Psoas muscle (tissue), 8 donors: ENCODE measurements at regions of chr19 and their contacts with region 1.

Region 1: DNA sequence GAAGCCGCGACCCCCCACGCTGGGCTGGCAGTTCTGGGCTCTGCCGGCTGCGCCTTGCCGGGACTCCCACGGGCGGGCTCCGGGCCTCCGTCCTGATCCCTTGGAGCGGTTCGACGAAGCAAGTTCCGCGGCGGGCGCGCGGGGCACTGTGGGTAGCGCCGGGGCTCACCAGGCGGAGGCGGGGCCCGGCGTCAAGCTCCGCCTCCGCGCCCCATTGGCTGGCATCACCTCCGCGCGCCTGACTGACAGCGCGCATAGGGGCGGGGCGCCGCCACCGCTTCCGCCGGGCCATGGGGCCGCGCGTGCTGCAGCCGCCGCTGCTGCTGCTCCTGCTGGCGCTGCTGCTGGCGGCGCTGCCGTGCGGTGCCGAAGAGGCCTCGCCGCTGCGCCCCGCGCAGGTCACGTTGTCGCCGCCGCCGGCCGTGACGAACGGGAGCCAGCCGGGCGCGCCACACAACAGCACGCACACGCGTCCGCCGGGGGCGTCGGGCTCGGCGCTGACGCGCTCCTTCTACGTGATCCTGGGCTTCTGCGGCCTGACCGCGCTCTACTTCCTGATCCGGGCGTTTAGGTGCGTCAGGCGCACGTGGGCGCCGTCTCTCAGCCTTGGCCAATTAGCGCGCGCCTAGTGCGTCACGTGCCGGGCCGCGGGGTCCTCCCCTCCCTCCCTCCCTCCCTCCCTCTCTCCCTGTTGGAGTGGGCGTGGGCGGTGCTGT is at the start of gene FAM174C:
- DNase-seq: peak; percentile 97
- ATAC-seq: peak; percentile 76 to 81 (median 77)
- H3K4me3 ChIP-seq: peak within 1 kb of the TSS; percentile 87
- H3K27ac ChIP-seq: peak within 1 kb of the TSS; percentile 99
- H3K4me1 ChIP-seq: peaks cover 56% of the 10 kb centered on the region
- H3K27me3 ChIP-seq: no peaks in the 10 kb centered on the region
- CTCF ChIP-seq: peak; percentile 8
- total RNA-seq, gene FAM174C: 9.0 to 18.1 (median 14.0) TPM

Region 2: DNA sequence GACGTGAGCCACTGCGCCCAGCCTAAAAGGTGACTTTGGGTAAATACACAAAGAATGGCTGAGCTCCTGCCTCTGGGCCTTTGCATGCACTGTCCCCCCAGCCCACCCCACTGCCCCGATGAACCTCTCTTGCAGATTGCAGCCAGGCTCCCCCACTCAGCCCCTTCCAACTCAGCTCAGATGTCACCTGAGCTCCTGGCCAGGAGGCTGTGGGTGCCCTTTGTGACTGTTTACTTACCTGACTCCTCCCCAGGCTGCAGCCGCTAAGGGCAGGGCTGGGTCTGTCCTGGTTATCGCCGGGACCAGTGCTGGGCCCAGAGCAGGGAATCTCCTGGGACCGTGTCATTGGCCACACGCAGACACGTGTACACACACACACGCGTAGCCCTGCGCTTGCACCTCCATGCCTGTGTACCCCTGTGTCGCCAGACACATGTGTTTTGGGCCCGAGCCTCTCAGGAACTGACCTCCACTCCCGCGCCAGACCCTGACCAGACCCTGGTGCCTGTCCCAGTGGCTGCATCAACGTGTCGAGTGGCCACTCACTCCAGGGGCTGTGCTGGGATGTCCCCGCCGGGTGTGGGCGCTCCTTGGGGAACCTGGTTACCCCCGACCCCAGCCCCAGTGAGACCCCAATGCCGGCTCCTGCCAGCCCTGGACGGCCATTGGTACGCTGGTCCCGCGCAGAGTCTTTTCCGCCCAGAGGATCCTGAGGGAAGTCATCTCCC is 28.9 kb after region 1 on chr19:
- intact Hi-C with region 1: no loop called
- DNase-seq: no peak
- ATAC-seq: peak in 1 of 4 donors; percentile 30
- H3K4me3 ChIP-seq: no peak overlapping the region
- H3K27ac ChIP-seq: no peak overlapping the region
- H3K4me1 ChIP-seq: no peaks in the 10 kb centered on the region
- H3K27me3 ChIP-seq: peaks cover 0 to 5% (median 2%) of the 10 kb centered on the region in 3 donors
- CTCF ChIP-seq: no peak

Region 3: GRCh38 chr19:1315470-1316231 is 40.2 kb after region 1 on chr19:
- intact Hi-C with region 1: no loop called
- DNase-seq: peak; percentile 60 to 73
- ATAC-seq: peak; percentile 82 to 97 (median 88)
- H3K4me3 ChIP-seq: peak overlapping the region; percentile 45
- H3K27ac ChIP-seq: no peak overlapping the region
- H3K4me1 ChIP-seq: peaks cover 6% of the 10 kb centered on the region
- H3K27me3 ChIP-seq: peaks cover 0 to 69% (median 13%) of the 10 kb centered on the region in 3 donors
- CTCF ChIP-seq: peak; percentile 59

Region 4: GRCh38 chr19:1355568-1356507 is 80.4 kb after region 1 on chr19:
- intact Hi-C with region 1: loop called in 1 of 2 experiments (anchors 5 kb)
- DNase-seq: no peak
- ATAC-seq: peak in 1 of 4 donors; percentile 17
- H3K4me3 ChIP-seq: peak overlapping the region; percentile 84
- H3K27ac ChIP-seq: peak overlapping the region; percentile 67
- H3K4me1 ChIP-seq: peaks cover 15% of the 10 kb centered on the region
- H3K27me3 ChIP-seq: no peaks in the 10 kb centered on the region
- CTCF ChIP-seq: no peak

Region 5: GRCh38 chr19:1394252-1395193 is 119.1 kb after region 1 on chr19:
- intact Hi-C with region 1: loop called in 1 of 2 experiments (anchors 5 kb)
- DNase-seq: no peak
- ATAC-seq: peak in 2 of 4 donors; percentile 4 to 9
- H3K4me3 ChIP-seq: no peak overlapping the region
- H3K27ac ChIP-seq: peak overlapping the region; percentile 30
- H3K4me1 ChIP-seq: peaks cover 18% of the 10 kb centered on the region
- H3K27me3 ChIP-seq: no peaks in the 10 kb centered on the region
- CTCF ChIP-seq: no peak

Region 6: GRCh38 chr19:1445185-1445931 is 169.9 kb after region 1 on chr19:
- intact Hi-C with region 1: loop called in 1 of 2 experiments (anchors 10 kb)
- DNase-seq: peak; percentile 74 to 85
- ATAC-seq: peak; percentile 86 to 90 (median 86)
- H3K4me3 ChIP-seq: peak overlapping the region; percentile 53
- H3K27ac ChIP-seq: no peak overlapping the region
- H3K4me1 ChIP-seq: peaks cover 3% of the 10 kb centered on the region
- H3K27me3 ChIP-seq: peaks cover 0 to 50% (median 31%) of the 10 kb centered on the region in 3 donors
- CTCF ChIP-seq: peak; percentile 87

Region 7: DNA sequence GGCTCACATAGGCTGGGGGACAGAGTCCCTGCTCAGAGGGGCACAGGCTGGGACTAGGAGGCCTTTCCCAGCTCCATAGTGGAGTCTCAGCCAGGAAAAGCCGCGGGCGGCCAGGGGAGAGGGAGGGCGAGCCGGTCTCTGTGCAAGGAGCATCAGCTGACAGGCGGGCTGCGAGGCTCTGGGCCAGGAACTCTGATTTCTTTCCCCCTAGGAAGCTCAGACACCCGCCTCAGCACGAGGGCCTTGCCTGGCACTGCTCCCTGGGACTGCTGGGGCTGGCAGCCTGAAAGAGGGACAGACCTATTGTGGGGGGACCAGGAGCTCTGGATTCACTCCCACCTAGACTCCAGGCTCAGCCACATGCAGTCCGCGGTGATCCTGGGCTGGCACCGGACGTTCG is 246.2 kb after region 1 on chr19:
- intact Hi-C with region 1: loop called in 1 of 2 experiments (anchors 10 kb)
- DNase-seq: no peak
- ATAC-seq: no peak
- H3K4me3 ChIP-seq: no peak overlapping the region
- H3K27ac ChIP-seq: no peak overlapping the region
- H3K4me1 ChIP-seq: no peaks in the 10 kb centered on the region
- H3K27me3 ChIP-seq: peaks cover 0 to 35% (median 10%) of the 10 kb centered on the region in 3 donors
- CTCF ChIP-seq: no peak